CD4-positive, alpha-beta memory T cell (primary cell): ENCODE measurements at regions of chr7 and their contacts with region 1.

Region 1: GRCh38 chr7:77247206-77247850 is 47.7 kb upstream of the FGL2 start:
- DNase-seq: peak; percentile 78 to 85 (median 80)
- H3K4me3 ChIP-seq: no peak overlapping the region
- H3K4me3 Mint-ChIP-seq: no peak overlapping the region
- H3K27ac ChIP-seq: no peak overlapping the region
- H3K27ac Mint-ChIP-seq: no peak overlapping the region
- H3K4me1 ChIP-seq: no peaks in the 10 kb centered on the region
- H3K4me1 Mint-ChIP-seq: peaks cover 0 to 4% (median under 1%) of the 10 kb centered on the region in 4 donors
- H3K27me3 ChIP-seq: no peaks in the 10 kb centered on the region
- H3K27me3 Mint-ChIP-seq: no peaks in the 10 kb centered on the region

Region 2: GRCh38 chr7:76179686-76180085 is 1067.6 kb before region 1 on chr7:
- CTCF ChIA-PET with region 1: no interaction called
- POLR2A ChIA-PET with region 1: no interaction called
- intact Hi-C with region 1: loop called (anchors 2 kb)
- DNase-seq: no peak
- H3K4me3 ChIP-seq: no peak overlapping the region
- H3K4me3 Mint-ChIP-seq: no peak overlapping the region
- H3K27ac ChIP-seq: no peak overlapping the region
- H3K27ac Mint-ChIP-seq: no peak overlapping the region
- H3K4me1 ChIP-seq: no peaks in the 10 kb centered on the region
- H3K4me1 Mint-ChIP-seq: peaks cover 0 to 6% (median 4%) of the 10 kb centered on the region in 4 donors
- H3K27me3 ChIP-seq: no peaks in the 10 kb centered on the region
- H3K27me3 Mint-ChIP-seq: peaks cover 0 to 3% of the 10 kb centered on the region in 2 donors

Region 3: DNA sequence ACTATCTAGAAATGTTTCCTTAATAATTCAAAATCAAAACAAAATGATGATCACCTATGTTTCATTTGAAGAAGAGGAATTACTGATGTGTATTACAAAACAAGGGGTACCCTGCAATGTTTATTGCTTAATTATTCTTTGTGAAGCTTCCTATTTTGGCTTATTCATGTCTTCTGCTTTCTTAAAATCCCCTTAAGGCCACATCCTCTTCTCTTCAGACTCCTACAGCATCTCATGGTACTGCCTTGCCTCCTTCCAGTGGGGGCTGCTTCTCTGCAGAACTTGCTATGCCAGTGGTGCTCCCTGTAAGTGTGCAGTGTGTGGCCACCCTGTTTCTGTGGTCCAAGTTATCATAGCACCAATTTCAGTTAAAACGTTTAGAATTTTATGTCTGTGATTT is 89.9 kb before region 1 on chr7:
- CTCF ChIA-PET with region 1: no interaction called
- POLR2A ChIA-PET with region 1: no interaction called
- intact Hi-C with region 1: no loop called
- DNase-seq: no peak
- H3K4me3 ChIP-seq: no peak overlapping the region
- H3K4me3 Mint-ChIP-seq: no peak overlapping the region
- H3K27ac ChIP-seq: no peak overlapping the region
- H3K27ac Mint-ChIP-seq: peak overlapping the region in 2 of 7 donors; percentile 0 to 44
- H3K4me1 ChIP-seq: no peaks in the 10 kb centered on the region
- H3K4me1 Mint-ChIP-seq: peaks cover 7 to 12% (median 10%) of the 10 kb centered on the region in 4 donors
- H3K27me3 ChIP-seq: no peaks in the 10 kb centered on the region
- H3K27me3 Mint-ChIP-seq: no peaks in the 10 kb centered on the region

Region 4: DNA sequence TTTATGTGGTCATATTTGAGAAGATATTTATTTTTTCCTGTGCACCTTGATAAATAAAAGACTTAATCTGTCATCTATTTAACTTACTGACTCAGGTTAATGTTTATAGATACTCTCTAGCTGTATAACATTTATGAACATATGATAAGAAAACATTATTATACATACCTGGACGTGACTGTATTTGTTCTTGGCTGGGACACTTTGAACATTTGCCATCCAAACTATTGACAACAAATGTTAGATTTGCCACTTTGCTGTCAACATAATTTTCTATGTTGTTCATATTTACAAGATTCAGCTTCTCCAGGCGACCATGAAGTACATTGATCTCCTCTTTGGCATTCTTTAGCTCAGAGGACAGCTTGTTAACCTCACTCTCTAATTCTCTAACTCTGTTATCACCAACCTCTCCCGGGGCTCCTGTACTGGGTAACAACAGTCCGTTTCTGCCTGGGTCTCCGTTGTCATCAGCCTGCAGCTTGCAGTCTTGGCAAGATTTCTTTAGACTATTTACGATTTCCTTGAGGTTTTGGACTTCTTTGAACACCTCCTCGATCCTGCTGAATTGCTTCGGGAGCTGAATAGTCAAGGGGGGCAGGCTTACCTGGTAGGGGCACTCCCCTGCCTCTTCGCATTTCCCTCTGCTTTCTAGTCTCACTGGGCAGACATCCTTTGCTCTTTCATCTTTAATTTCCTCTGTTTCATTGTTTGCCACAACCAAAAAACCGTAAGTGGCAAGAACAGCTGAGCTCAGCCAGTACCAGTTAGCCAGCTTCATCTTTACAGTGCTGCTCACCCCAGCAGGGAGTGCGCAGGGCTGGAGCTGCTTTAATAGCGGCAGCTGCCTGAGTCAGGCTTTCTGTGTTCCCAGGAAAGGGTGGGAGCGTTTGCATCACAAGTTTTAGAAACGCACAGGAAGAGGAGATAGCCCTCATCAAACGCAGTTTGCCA is 48.0 kb before region 1 on chr7 and contains the start of gene FGL2:
- CTCF ChIA-PET with region 1: interaction called, 26 read pairs
- POLR2A ChIA-PET with region 1: interaction called, 10 read pairs
- intact Hi-C with region 1: loop called (anchors 5 kb)
- DNase-seq: peak; percentile 37 to 49 (median 43)
- H3K4me3 ChIP-seq: peak within 1 kb of the TSS; percentile 51 to 67
- H3K4me3 Mint-ChIP-seq: peak within 1 kb of the TSS; percentile 82 to 93 (median 88)
- H3K27ac ChIP-seq: peak within 1 kb of the TSS; percentile 56
- H3K27ac Mint-ChIP-seq: peak within 1 kb of the TSS; percentile 60 to 96 (median 91)
- H3K4me1 ChIP-seq: peaks cover 52% of the 10 kb centered on the region
- H3K4me1 Mint-ChIP-seq: peaks cover 27 to 42% (median 34%) of the 10 kb centered on the region in 4 donors
- H3K27me3 ChIP-seq: no peaks in the 10 kb centered on the region
- H3K27me3 Mint-ChIP-seq: no peaks in the 10 kb centered on the region
- total RNA-seq, gene FGL2: 2.9 to 4.5 TPM

Region 5: GRCh38 chr7:77258014-77258413 is 10.7 kb after region 1 on chr7:
- CTCF ChIA-PET with region 1: interaction called, 11 read pairs
- POLR2A ChIA-PET with region 1: no interaction called
- intact Hi-C with region 1: no loop called
- DNase-seq: no peak
- H3K4me3 ChIP-seq: no peak overlapping the region
- H3K4me3 Mint-ChIP-seq: no peak overlapping the region
- H3K27ac ChIP-seq: no peak overlapping the region
- H3K27ac Mint-ChIP-seq: no peak overlapping the region
- H3K4me1 ChIP-seq: no peaks in the 10 kb centered on the region
- H3K4me1 Mint-ChIP-seq: no peaks in the 10 kb centered on the region
- H3K27me3 ChIP-seq: no peaks in the 10 kb centered on the region
- H3K27me3 Mint-ChIP-seq: no peaks in the 10 kb centered on the region

Region 6: DNA sequence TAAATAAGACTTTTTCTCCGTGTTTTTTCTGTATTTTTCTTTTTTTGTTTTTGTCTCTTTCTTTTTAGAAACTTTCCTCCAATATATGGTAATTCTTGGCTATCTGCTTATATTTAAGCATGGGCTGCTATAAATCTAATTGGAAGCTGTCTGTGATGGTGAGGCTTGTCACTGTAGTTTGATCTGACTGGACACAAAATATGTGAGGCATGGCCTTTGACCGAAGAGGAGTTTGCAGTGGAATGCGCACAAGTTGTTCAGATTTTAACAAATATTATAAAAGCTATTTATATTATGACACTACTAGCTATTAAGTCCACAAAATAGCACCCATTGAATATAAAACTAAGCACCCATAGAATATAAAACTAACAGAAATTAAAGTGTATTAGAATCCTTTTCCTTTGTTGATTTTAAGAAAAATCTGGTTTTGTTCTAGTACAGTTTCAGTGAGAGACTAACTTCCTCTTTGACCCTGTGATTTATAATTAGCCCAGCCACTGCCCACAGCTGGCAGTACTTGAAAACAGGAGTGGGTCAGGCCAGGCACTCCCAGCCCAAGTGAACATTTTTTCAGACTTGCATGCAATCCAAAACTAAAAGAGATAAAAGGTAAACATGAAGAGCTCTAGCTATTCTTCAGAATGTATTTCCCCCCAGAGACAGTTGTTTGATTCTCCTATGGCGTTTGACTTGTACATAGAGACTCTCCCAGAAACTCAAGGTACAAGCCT is 22.2 kb after region 1 on chr7:
- CTCF ChIA-PET with region 1: interaction called, 13 read pairs
- POLR2A ChIA-PET with region 1: no interaction called
- intact Hi-C with region 1: no loop called
- DNase-seq: no peak
- H3K4me3 ChIP-seq: no peak overlapping the region
- H3K4me3 Mint-ChIP-seq: no peak overlapping the region
- H3K27ac ChIP-seq: no peak overlapping the region
- H3K27ac Mint-ChIP-seq: no peak overlapping the region
- H3K4me1 ChIP-seq: no peaks in the 10 kb centered on the region
- H3K4me1 Mint-ChIP-seq: no peaks in the 10 kb centered on the region
- H3K27me3 ChIP-seq: no peaks in the 10 kb centered on the region
- H3K27me3 Mint-ChIP-seq: no peaks in the 10 kb centered on the region

Region 7: DNA sequence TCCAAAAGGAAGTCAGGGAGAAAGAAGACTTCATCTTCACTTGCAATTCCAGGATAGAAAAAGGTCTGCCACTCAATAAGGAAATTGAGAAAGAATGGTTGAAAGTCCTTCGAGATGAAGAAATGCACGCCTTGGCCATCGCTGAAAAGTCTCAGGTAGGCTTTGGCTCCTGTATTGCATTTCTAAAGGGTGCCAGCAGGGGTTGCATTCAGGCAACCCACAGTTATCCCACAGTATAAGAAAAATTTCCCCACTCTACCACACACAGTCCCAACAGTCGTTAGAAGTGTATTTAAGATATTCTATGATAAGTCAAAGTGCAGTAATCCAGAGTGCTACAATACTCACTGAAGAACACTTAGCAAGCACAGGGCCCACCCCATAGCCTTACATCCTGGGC is 45.7 kb after region 1 on chr7:
- CTCF ChIA-PET with region 1: no interaction called
- POLR2A ChIA-PET with region 1: no interaction called
- intact Hi-C with region 1: no loop called
- DNase-seq: no peak
- H3K4me3 ChIP-seq: no peak overlapping the region
- H3K4me3 Mint-ChIP-seq: no peak overlapping the region
- H3K27ac ChIP-seq: no peak overlapping the region
- H3K27ac Mint-ChIP-seq: peak overlapping the region in 1 of 7 donors; percentile 25
- H3K4me1 ChIP-seq: no peaks in the 10 kb centered on the region
- H3K4me1 Mint-ChIP-seq: no peaks in the 10 kb centered on the region
- H3K27me3 ChIP-seq: no peaks in the 10 kb centered on the region
- H3K27me3 Mint-ChIP-seq: no peaks in the 10 kb centered on the region

Region 8: DNA sequence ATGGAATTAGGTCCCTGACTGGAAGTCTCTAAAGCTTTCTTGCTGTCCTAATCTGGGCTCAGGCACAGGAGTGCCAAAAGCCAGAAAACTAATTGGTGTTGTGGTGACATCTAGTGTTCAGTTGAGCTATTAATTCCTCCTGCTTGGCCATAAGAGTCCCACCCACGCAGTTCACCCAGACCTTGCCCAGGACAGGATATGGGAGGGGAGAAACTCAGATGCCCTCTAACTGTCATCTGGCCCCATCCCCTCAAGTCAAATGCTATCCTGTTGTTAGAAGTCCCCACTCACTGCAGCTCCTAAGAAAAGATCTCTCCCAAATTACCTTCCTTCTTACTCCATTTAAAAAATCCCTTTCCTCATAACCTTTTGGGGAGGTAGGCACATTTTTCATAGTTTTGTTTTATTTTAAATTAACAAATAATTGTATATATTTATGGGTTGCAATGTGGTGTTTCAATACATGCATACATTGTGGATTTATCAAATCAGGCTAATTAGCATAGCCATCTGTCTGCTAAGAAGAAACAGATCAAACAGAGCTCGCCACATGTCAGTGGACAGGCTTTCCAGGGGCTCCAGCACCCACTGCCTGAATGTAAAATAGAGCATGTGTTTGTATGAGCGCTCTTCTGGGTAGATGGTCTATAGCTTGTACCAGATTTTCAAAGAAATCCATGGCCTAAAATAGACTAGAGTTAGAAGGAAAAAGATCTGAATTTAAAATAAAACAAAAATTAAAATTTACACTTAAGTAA is 84.8 kb after region 1 on chr7:
- CTCF ChIA-PET with region 1: interaction called, 26 read pairs
- POLR2A ChIA-PET with region 1: interaction called, 5 read pairs
- intact Hi-C with region 1: loop called (anchors 1 kb)
- DNase-seq: peak in 4 of 5 donors; percentile 51 to 57 (median 54)
- H3K4me3 ChIP-seq: no peak overlapping the region
- H3K4me3 Mint-ChIP-seq: no peak overlapping the region
- H3K27ac ChIP-seq: no peak overlapping the region
- H3K27ac Mint-ChIP-seq: no peak overlapping the region
- H3K4me1 ChIP-seq: peaks cover 38% of the 10 kb centered on the region
- H3K4me1 Mint-ChIP-seq: peaks cover 31 to 56% (median 39%) of the 10 kb centered on the region in 4 donors
- H3K27me3 ChIP-seq: no peaks in the 10 kb centered on the region
- H3K27me3 Mint-ChIP-seq: no peaks in the 10 kb centered on the region

Region 9: GRCh38 chr7:77409739-77410547 is 162.6 kb after region 1 on chr7:
- CTCF ChIA-PET with region 1: no interaction called
- POLR2A ChIA-PET with region 1: no interaction called
- intact Hi-C with region 1: no loop called
- DNase-seq: no peak
- H3K4me3 ChIP-seq: no peak overlapping the region
- H3K4me3 Mint-ChIP-seq: no peak overlapping the region
- H3K27ac ChIP-seq: no peak overlapping the region
- H3K27ac Mint-ChIP-seq: peak overlapping the region in 1 of 7 donors; percentile 62
- H3K4me1 ChIP-seq: peaks cover 11% of the 10 kb centered on the region
- H3K4me1 Mint-ChIP-seq: peaks cover 14 to 32% (median 17%) of the 10 kb centered on the region in 4 donors
- H3K27me3 ChIP-seq: no peaks in the 10 kb centered on the region
- H3K27me3 Mint-ChIP-seq: no peaks in the 10 kb centered on the region

Region 10: GRCh38 chr7:77425101-77426051 is 178.0 kb after region 1 on chr7:
- CTCF ChIA-PET with region 1: no interaction called
- POLR2A ChIA-PET with region 1: no interaction called
- intact Hi-C with region 1: no loop called
- DNase-seq: no peak
- H3K4me3 ChIP-seq: no peak overlapping the region
- H3K4me3 Mint-ChIP-seq: no peak overlapping the region
- H3K27ac ChIP-seq: no peak overlapping the region
- H3K27ac Mint-ChIP-seq: no peak overlapping the region
- H3K4me1 ChIP-seq: peaks cover 21% of the 10 kb centered on the region
- H3K4me1 Mint-ChIP-seq: peaks cover 9 to 22% (median 19%) of the 10 kb centered on the region in 4 donors
- H3K27me3 ChIP-seq: no peaks in the 10 kb centered on the region
- H3K27me3 Mint-ChIP-seq: peaks cover 2 to 3% of the 10 kb centered on the region in 2 donors